Posterior vena cava (tissue), 2 donors: ENCODE measurements at regions of chr11 and their contacts with region 1.

Region 1: DNA sequence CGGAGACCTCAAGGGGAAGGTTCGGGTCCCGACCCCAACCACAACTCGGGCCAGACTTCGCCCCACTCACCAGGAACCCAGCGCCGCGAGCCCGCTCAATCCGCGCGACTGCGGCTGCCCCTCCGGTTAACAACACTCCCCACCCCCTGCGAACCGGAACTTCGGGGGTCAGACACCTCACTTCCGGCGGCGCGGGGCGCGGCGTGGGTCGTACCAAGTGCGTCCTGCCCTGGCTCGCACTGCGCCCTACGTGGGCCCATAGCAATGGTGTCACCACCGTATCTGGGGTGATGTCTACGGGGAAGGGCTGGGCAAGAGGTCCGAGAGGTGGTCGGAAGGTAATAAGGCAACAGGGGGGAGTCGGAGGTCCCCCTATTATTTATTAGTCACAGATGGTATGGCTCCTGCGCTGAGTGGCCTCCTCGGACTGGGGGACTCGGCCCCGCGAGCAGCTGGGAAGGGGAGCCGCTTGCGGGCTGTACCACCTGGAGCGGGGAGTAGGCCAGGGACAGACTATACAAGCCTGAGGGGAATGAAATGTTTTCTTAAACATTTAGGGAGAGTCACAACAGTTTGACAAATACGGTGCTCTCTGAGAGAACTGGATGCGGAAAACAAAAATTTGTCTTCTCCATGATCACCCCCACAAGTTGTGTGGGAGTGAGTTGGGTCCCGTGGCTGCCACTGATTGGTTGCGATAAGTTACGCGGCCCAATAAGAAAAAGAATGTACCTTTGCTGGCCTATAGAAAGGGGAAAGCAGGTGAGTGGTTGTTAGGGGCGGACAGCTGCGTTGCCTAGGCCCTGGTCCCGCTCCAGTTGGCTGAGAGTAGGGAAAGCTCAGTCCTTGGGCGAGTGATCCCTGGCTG is at the start of gene SYVN1:
- DNase-seq: peak; percentile 97
- total RNA-seq, gene SYVN1: 52.7 to 57.0 TPM

Region 2: GRCh38 chr11:65078151-65078550 is 56.5 kb before region 1 on chr11:
- intact Hi-C with region 1: no loop called
- DNase-seq: no peak

Region 3: GRCh38 chr11:65180877-65181568 is 46.4 kb after region 1 on chr11:
- intact Hi-C with region 1: loop called (anchors 5 kb)
- DNase-seq: peak; percentile 90